SK-N-SH (cell line): ENCODE measurements at regions of chr12 and their contacts with region 1.

Region 1: DNA sequence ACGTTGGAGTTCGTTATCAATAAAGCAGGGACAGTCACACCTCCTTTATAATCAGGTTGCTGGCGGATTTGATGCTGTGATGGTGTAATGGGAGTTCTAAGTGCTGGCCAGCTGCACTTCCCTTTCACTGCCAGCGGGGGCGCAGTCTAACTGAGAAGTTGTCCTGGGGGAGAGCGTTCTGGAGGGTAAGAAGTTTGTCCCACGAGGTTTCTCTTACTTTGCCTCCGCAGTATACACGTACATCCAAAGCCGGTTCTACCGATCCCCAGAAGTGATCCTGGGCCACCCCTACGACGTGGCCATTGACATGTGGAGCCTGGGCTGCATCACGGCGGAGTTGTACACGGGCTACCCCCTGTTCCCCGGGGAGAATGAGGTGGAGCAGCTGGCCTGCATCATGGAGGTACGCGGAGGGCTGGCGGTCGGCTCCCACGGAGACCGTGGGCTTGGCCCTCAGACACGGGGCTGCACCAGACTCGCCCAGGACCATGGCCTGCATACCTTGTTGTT is 42.7 kb downstream of the DYRK4 start:
- DNase-seq: peak; percentile 72
- H3K4me3 ChIP-seq: peak overlapping the region; percentile 88 to 97
- H3K27ac ChIP-seq: peak overlapping the region in 1 of 2 experiments; percentile 77; a peak in 1 of 4 replicates
- H3K4me1 ChIP-seq: peaks cover 0 to 19% of the 10 kb centered on the region in 2 experiments; a peak in 2 of 4 replicates
- H3K27me3 ChIP-seq: peaks cover 22% of the 10 kb centered on the region; the same call in 1 of the 2 replicates
- CTCF ChIP-seq: peak; percentile 96
- EP300 ChIP-seq: no peak
- RAD21 ChIP-seq: peak; percentile 70

Region 2: GRCh38 chr12:4579305-4580102 is 25.2 kb before region 1 on chr12:
- CTCF ChIA-PET with region 1: interaction called, 13 read pairs
- POLR2A ChIA-PET with region 1: no interaction called
- DNase-seq: peak; percentile 54
- H3K4me3 ChIP-seq: no peak overlapping the region
- H3K27ac ChIP-seq: no peak overlapping the region
- H3K4me1 ChIP-seq: no peaks in the 10 kb centered on the region
- H3K27me3 ChIP-seq: peaks cover 29% of the 10 kb centered on the region; the same call in 1 of the 2 replicates
- CTCF ChIP-seq: peak; percentile 37; the same call in 1 of the 2 replicates
- EP300 ChIP-seq: no peak
- RAD21 ChIP-seq: peak; percentile 76

Region 3: DNA sequence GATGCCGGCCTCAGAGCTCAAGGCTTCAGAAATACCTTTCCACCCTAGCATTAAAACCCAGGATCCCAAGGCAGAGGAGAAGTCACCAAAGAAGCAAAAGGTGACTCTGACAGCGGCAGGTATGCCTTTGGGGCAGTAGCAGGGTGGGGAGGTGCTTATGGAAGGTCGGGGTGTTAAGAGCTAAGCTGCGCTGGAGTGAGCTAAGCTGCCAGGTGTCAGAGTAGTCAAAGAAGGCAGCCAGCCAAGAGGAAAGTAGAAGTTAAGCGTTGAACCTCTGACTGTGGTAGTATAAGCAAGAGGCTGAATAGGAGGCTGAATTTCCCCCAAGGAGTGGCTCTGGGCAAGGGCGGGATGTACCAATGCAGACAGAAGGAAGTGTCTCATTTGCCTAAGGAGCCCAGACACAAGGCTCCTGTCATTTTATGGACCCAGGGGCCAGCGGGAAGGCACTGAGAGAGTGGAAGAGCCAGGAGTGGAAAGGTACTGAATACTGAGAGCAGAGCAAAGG is 13.5 kb before region 1 on chr12:
- CTCF ChIA-PET with region 1: interaction called, 28 read pairs
- POLR2A ChIA-PET with region 1: no interaction called
- DNase-seq: no peak
- H3K4me3 ChIP-seq: no peak overlapping the region
- H3K27ac ChIP-seq: no peak overlapping the region
- H3K4me1 ChIP-seq: no peaks in the 10 kb centered on the region
- H3K27me3 ChIP-seq: peaks cover 23% of the 10 kb centered on the region; the same call in 1 of the 2 replicates
- CTCF ChIP-seq: no peak
- EP300 ChIP-seq: no peak
- RAD21 ChIP-seq: no peak

Region 4: GRCh38 chr12:4615667-4616066 is 10.9 kb after region 1 on chr12:
- CTCF ChIA-PET with region 1: interaction called, 12 read pairs
- POLR2A ChIA-PET with region 1: no interaction called
- DNase-seq: no peak
- H3K4me3 ChIP-seq: no peak overlapping the region
- H3K27ac ChIP-seq: no peak overlapping the region
- H3K4me1 ChIP-seq: no peaks in the 10 kb centered on the region
- H3K27me3 ChIP-seq: no peaks in the 10 kb centered on the region
- CTCF ChIP-seq: no peak
- EP300 ChIP-seq: no peak
- RAD21 ChIP-seq: no peak

Region 5: DNA sequence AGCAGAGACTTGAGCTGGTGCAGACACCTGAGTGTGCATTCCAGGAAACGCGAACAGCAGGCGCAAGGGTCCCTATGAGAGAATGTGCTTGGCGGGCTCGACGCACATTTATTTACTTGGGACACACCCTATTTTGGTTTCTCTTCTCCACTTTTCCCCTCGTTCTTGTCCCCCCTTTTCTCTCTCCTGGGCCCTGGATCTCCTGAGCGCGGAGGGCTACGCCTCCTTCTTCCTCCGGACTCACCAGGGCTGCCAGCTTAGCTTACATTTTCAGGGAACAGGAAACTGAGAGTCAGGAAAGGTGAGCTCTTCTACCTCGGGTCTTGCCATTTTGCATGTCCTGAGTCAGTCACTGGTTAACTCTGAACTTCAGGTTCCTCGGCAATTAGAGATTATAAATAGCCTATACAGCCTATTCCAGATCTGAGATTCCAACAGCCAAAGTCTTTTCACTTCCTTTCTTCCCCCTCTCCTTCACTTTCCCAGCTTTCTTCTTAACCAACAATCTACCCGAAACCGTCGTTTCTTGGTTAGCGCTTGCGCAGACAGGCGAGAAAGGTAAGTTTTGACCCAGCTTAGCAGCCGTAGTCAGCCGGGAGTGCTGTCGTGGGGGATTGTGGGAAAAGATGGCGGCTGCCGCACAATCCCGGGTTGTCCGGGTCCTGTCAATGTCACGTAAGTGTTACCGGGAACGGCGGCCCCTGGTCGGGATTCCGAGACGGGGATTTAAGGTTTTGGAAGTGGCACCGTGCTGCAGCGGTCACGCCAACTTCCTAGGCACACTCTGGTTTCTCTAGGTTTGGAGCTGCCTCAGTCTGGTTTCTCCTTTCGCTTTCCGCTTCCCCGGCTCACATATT is 44.0 kb after region 1 on chr12 and contains the starts of genes AKAP3 and NDUFA9:
- CTCF ChIA-PET with region 1: interaction called, 16 read pairs
- POLR2A ChIA-PET with region 1: no interaction called
- DNase-seq: peak; percentile 79
- H3K4me3 ChIP-seq: peak within 1 kb of the TSS; percentile 86 to 97
- H3K27ac ChIP-seq: peak within 1 kb of the TSS; percentile 59 to 82; a peak in 3 of 4 replicates
- H3K4me1 ChIP-seq: peaks cover 10 to 13% of the 10 kb centered on the region in 2 experiments; a peak in 3 of 4 replicates
- H3K27me3 ChIP-seq: no peaks in the 10 kb centered on the region
- CTCF ChIP-seq: no peak
- EP300 ChIP-seq: no peak
- RAD21 ChIP-seq: no peak
- polyA plus RNA-seq, gene AKAP3: 0.12 and 0.24 TPM in 2 replicates
- polyA plus RNA-seq, gene NDUFA9: 53.0 and 55.9 TPM in 2 replicates

Region 6: DNA sequence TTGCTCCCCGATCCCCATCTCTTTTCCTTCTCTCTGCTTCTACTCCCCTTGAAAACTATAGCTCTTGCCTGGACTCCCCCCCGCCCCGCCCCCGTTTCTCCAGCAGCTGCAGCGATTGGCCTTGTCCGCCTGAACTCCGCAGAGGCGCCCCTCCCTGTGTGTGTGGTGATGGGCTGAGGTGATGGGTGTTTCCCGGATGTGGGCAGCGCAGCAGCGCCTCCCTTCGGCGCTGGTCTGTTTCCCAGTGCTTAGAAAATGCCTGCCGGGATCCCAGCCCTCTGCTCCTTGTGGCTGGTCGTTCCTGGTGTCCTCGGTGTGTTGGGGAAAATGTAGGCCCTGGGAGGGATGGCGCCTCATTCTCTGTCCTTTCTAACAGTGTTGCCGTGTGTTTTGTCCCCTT is 158.8 kb after region 1 on chr12:
- CTCF ChIA-PET with region 1: interaction called, 21 read pairs
- POLR2A ChIA-PET with region 1: no interaction called
- DNase-seq: peak; percentile 38
- H3K4me3 ChIP-seq: no peak overlapping the region; a peak in 1 of 4 replicates
- H3K27ac ChIP-seq: no peak overlapping the region
- H3K4me1 ChIP-seq: no peaks in the 10 kb centered on the region
- H3K27me3 ChIP-seq: no peaks in the 10 kb centered on the region; the same call in 1 of the 2 replicates
- CTCF ChIP-seq: no peak
- EP300 ChIP-seq: no peak
- RAD21 ChIP-seq: no peak